Activated naive CD4-positive, alpha-beta T cell treated with anti-CD3 and anti-CD28 coated beads for 36 hours (primary cell): ENCODE measurements at regions of chrX and their contacts with region 1.

Region 1: GRCh38 chrX:44872817-44873414 is at the start of gene KDM6A:
- DNase-seq: peak; percentile 96
- H3K4me3 Mint-ChIP-seq: peak within 1 kb of the TSS; percentile 93
- H3K27ac Mint-ChIP-seq: peak within 1 kb of the TSS; percentile 98
- H3K4me1 Mint-ChIP-seq: peaks cover 7% of the 10 kb centered on the region
- H3K27me3 Mint-ChIP-seq: no peaks in the 10 kb centered on the region
- total RNA-seq, gene KDM6A: 21.5 to 22.5 TPM

Region 2: DNA sequence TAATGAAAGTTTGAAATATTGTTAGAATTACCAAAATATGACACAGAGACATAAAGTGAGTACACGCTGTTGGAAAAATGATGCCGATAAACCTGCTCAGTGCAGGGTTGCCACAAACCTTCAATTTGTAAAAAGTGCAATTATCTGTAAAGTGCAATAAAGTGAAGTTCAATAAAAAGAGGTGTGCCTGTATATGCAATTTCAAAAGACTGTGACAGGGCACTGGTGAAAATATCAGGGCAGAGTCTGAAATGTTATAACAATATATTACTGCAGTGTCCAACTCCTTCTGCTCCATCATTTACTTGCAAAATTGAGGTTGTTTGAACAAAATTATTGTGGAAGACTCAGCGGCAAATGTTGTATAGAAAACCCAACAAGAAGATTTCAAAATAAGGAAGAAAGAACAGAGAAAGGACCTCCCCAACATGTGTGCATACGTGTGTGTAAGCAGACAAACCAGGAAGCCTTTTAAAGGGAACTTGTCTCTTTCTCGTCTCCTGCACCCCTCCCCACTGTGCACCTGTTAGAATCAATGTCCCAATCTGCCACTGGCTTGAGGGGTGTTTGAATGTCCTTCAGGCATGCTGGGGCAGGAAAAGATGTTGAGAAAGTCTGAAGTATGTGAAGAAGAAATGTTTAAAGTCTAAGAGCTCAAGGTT is 1086.9 kb before region 1 on chrX:
- CTCF ChIA-PET with region 1: no interaction called
- intact Hi-C with region 1: no loop called
- DNase-seq: no peak
- H3K4me3 Mint-ChIP-seq: no peak overlapping the region
- H3K27ac Mint-ChIP-seq: no peak overlapping the region
- H3K4me1 Mint-ChIP-seq: no peaks in the 10 kb centered on the region
- H3K27me3 Mint-ChIP-seq: no peaks in the 10 kb centered on the region

Region 3: GRCh38 chrX:44152852-44153251 is 720.1 kb before region 1 on chrX:
- CTCF ChIA-PET with region 1: no interaction called
- intact Hi-C with region 1: no loop called
- DNase-seq: no peak
- H3K4me3 Mint-ChIP-seq: no peak overlapping the region
- H3K27ac Mint-ChIP-seq: no peak overlapping the region
- H3K4me1 Mint-ChIP-seq: no peaks in the 10 kb centered on the region
- H3K27me3 Mint-ChIP-seq: no peaks in the 10 kb centered on the region

Region 4: GRCh38 chrX:44542567-44543325 is 330.2 kb before region 1 on chrX and contains the start of gene FUNDC1:
- CTCF ChIA-PET with region 1: no interaction called
- intact Hi-C with region 1: loop called (anchors 5 kb)
- DNase-seq: peak; percentile 94
- H3K4me3 Mint-ChIP-seq: peak within 1 kb of the TSS; percentile 84
- H3K27ac Mint-ChIP-seq: peak within 1 kb of the TSS; percentile 84
- H3K4me1 Mint-ChIP-seq: peaks cover 15% of the 10 kb centered on the region
- H3K27me3 Mint-ChIP-seq: no peaks in the 10 kb centered on the region
- total RNA-seq, gene FUNDC1: 11.9 to 12.8 TPM

Region 5: DNA sequence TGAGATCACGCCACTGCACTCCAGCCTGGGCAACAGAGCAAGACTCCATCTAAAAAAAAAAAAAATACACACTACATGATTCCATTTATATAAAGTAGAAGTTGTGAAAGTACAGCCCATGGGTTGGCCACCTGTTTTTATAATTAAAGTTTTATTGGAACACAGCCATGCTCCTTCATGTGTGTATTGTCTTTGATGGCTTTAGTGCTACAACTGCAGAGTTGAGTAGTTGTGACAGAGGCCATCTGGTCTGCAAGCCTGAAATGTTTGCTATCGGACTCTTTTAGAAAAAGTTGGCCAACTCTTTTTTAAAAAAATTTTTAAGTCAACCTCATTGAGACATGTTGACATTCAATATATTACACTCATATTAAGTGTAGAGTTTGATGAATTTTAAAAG is 70.3 kb before region 1 on chrX:
- CTCF ChIA-PET with region 1: no interaction called
- intact Hi-C with region 1: no loop called
- DNase-seq: no peak
- H3K4me3 Mint-ChIP-seq: no peak overlapping the region
- H3K27ac Mint-ChIP-seq: no peak overlapping the region
- H3K4me1 Mint-ChIP-seq: no peaks in the 10 kb centered on the region
- H3K27me3 Mint-ChIP-seq: no peaks in the 10 kb centered on the region

Region 6: DNA sequence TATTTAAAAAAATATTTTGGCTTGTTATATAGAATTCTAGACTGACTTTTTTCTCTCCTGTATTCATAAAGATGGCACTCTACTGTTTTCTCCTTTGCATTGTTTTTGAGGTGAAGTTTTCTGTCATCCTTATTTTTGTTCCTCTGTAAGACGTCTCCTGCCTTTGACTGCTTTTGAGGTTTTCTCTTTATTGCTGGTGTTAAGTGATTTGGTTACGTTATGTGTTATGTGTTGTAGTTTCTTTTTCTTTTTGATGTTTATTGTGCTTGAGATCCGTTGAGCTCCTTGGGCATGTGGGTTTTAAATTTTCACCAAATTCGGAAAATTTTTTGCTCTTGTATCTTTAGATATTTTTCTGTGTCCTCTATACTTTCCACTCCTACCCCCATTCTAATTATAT is 50.1 kb after region 1 on chrX:
- CTCF ChIA-PET with region 1: no interaction called
- intact Hi-C with region 1: loop called (anchors 5 kb)
- DNase-seq: no peak
- H3K4me3 Mint-ChIP-seq: no peak overlapping the region
- H3K27ac Mint-ChIP-seq: peak overlapping the region; percentile 50
- H3K4me1 Mint-ChIP-seq: peaks cover 54% of the 10 kb centered on the region
- H3K27me3 Mint-ChIP-seq: no peaks in the 10 kb centered on the region

Region 7: DNA sequence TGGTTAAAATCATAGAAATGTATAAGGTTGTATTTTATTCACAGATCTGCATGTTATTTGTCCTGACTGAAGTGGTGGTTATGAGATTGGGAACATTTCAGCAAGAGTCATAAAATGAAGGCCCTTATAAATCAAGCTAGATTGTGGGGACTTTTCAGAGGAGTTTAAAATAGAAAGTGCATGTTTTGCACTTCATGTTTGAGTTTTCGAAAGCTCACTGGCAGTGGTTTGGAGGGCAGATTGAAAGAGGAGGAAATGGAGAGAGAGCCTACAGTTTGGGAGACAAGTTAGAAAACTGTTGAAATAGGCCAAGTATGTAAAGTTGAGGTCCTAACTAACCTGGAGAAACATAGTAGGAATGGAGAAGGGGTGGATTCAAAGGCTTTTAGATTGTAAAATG is 125.0 kb after region 1 on chrX:
- CTCF ChIA-PET with region 1: no interaction called
- intact Hi-C with region 1: loop called (anchors 2 kb)
- DNase-seq: peak; percentile 8
- H3K4me3 Mint-ChIP-seq: peak overlapping the region; percentile 27
- H3K27ac Mint-ChIP-seq: peak overlapping the region; percentile 78
- H3K4me1 Mint-ChIP-seq: peaks cover 68% of the 10 kb centered on the region
- H3K27me3 Mint-ChIP-seq: no peaks in the 10 kb centered on the region

Region 8: DNA sequence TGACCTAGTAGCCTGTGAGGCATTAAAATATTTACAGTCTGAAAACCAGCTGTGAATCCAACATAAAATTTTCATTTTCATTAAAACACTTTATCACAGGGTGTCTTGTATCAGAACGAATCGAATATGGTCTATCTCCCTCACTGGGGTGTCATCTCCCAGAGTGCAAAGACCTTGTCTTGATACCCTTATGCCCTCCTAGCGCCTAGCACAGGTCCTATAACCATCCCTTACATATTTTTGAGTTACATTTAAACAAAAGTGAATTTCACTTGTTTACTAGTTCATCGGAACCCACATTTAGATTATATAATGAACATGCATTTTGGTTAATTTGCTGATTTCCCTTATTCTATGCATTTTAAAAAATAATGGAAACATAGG is 313.7 kb after region 1 on chrX:
- CTCF ChIA-PET with region 1: no interaction called
- intact Hi-C with region 1: loop called (anchors 1 kb)
- DNase-seq: no peak
- H3K4me3 Mint-ChIP-seq: peak overlapping the region; percentile 77
- H3K27ac Mint-ChIP-seq: no peak overlapping the region
- H3K4me1 Mint-ChIP-seq: peaks cover 33% of the 10 kb centered on the region
- H3K27me3 Mint-ChIP-seq: no peaks in the 10 kb centered on the region